ENCODE measurements at regions of chr3 and their contacts with region 1.

Region 1: DNA sequence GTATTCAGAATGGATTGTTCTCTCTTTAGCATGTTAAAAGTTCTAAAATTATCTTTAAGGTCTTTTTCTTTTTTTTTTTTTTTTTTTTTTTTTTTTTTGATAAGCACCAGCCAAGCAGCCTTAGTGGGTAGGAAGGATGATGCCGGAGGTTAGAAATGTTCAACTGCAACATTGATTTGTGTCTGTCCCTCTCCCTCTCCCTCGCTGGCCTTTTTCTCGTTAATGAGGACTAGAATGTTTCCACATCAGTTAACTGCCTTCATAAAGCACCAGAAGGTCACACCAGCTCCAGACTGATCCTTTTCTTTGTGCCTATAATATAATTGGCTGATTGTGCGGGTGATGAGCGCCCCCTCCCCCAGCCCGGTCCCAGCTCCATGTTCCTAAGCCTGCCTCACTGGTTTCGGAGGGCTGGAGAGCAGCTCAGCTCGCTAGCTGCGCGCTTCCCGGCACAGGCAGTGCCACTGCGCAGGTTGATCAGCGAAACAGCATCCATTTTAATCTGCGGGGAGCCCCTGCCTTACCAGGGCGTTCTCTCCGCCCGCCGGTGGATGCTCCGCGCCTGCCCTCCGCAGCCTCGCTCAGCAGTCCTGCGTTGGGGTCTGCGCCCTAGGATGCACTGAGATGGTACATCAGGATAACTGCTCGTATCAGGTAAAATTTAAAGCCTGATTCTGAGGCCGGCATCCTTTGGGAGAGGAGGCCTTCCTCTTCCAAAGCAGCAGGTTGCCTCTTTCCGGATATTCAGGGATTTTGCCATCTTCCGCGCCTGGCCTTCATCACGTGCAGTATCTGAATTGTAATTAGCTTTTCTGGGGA is 148.9 kb upstream of the IL12A start:
- DNase-seq: no peak
- CTCF ChIP-seq: no peak

Region 2: DNA sequence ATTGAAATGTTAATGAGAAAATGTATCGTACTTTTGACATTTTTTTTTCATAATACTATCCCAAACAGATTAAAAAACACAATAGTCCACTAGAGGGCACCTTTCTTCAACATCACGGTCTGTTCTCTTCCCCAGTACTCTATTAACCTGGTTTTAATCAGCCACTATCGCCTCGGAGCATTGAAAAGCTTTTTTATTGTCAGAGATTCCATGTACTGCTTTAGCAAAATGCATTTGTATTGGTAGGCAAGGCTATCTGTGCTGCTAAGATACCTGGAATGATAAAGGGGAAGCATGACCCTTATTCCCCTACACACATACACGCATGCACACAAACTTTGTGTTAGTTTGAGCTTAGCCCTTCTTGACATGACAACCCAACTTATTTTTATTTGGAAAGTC is 11.2 kb before region 1 on chr3:
- CTCF ChIA-PET with region 1: interaction called, 21 read pairs
- POLR2A ChIA-PET with region 1: no interaction called
- DNase-seq: peak; percentile 47
- CTCF ChIP-seq: peak; percentile 38

Region 3: DNA sequence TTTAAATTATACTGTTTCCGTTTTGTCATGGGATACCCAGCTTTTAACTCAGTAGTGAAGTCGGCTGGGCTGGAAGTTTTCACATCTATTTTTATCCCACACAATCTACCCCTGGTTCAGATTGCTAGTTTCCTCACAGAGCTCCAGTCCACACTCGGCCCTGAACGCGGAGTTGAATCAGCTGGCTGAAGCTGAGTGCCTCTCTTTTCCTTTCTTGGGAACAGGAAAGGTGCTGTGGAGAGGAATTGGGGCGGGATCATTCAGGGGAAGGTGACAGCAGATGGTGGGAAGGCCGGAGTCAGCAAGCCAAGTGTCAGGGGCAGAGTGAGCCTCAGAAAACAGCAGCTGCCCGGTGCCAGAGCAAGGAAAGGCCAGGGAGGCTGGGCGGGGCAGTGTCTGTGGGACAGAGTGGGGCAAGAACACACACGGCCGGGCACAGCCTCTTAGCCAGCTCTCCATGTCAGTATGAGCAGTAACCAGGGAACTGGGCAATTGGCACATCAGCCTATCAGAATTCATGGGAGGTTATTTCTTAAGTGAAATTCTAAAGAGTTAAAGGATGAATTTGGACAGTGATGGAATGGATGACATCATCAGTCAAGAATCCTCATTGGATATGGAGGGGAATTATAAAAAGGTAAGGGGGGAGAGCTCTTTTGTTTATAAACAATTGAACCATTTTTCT is 13.2 kb after region 1 on chr3:
- CTCF ChIA-PET with region 1: interaction called, 15 read pairs
- POLR2A ChIA-PET with region 1: no interaction called
- DNase-seq: no peak
- CTCF ChIP-seq: no peak

Measured in GM10248 (cell line).